Adrenal gland (tissue), 19 donors: ENCODE measurements at regions of chr19 and their contacts with region 1.

Region 1: GRCh38 chr19:36114763-36115452 is at the start of gene POLR2I:
- DNase-seq: peak; percentile 99 to 100 (median 100)
- H3K4me3 ChIP-seq: peak within 1 kb of the TSS; percentile 4 to 90 (median 70)
- H3K27ac ChIP-seq: peak within 1 kb of the TSS; percentile 49 to 92 (median 67)
- H3K4me1 ChIP-seq: peaks cover 7 to 22% of the 10 kb centered on the region in 2 donors
- H3K27me3 ChIP-seq: no peaks in the 10 kb centered on the region
- CTCF ChIP-seq: no peak
- POLR2A ChIP-seq: peak in 1 of 2 donors; percentile 69
- total RNA-seq, gene POLR2I: 38.0 to 88.3 (median 74.9) TPM

Region 2: DNA sequence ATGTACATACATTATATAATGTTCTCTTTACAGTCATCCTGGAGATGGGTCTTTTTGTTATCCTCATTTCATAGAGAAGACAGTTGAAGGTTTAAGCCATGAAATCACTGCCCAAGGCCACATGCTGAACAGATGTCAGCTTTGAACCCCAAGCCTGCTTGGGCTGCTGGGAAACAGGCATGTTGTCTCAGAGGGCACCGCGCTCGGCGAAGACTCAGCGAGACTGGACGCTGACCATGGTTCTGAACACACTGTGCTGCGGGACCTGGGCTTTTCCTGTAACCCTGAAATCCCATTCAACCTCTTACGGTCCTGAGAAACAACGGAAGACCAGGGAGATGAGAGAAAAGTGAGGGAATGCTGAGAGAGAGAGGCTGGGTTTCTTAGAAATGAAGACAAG is 151.4 kb before region 1 on chr19:
- intact Hi-C with region 1: no loop called
- DNase-seq: peak in 6 of 7 donors; percentile 35 to 63 (median 54)
- H3K4me3 ChIP-seq: no peak overlapping the region
- H3K27ac ChIP-seq: no peak overlapping the region
- H3K4me1 ChIP-seq: peaks cover 0 to 8% of the 10 kb centered on the region in 2 donors
- H3K27me3 ChIP-seq: peaks cover 25% of the 10 kb centered on the region
- CTCF ChIP-seq: no peak
- POLR2A ChIP-seq: no peak

Region 3: GRCh38 chr19:36060430-36060829 is 54.5 kb before region 1 on chr19:
- intact Hi-C with region 1: loop called in 1 of 2 experiments (anchors 10 kb)
- DNase-seq: peak; percentile 40 to 76 (median 70)
- H3K4me3 ChIP-seq: no peak overlapping the region
- H3K27ac ChIP-seq: no peak overlapping the region
- H3K4me1 ChIP-seq: peaks cover 0 to 2% of the 10 kb centered on the region in 2 donors
- H3K27me3 ChIP-seq: no peaks in the 10 kb centered on the region
- CTCF ChIP-seq: peak; percentile 19 to 72 (median 58)
- POLR2A ChIP-seq: no peak

Region 4: GRCh38 chr19:36151144-36152018 is 36.5 kb after region 1 on chr19:
- intact Hi-C with region 1: no loop called
- DNase-seq: peak; percentile 63 to 89 (median 69)
- H3K4me3 ChIP-seq: peak overlapping the region in 3 of 4 donors; percentile 33 to 69 (median 55)
- H3K27ac ChIP-seq: peak overlapping the region; percentile 93 to 98 (median 94)
- H3K4me1 ChIP-seq: peaks cover 6 to 13% of the 10 kb centered on the region in 2 donors
- H3K27me3 ChIP-seq: no peaks in the 10 kb centered on the region
- CTCF ChIP-seq: no peak
- POLR2A ChIP-seq: peak; percentile 41 to 59